Activated naive CD4-positive, alpha-beta T cell treated with anti-CD3 and anti-CD28 coated beads for 36 hours (primary cell): ENCODE measurements at regions of chr10 and their contacts with region 1.

Region 1: DNA sequence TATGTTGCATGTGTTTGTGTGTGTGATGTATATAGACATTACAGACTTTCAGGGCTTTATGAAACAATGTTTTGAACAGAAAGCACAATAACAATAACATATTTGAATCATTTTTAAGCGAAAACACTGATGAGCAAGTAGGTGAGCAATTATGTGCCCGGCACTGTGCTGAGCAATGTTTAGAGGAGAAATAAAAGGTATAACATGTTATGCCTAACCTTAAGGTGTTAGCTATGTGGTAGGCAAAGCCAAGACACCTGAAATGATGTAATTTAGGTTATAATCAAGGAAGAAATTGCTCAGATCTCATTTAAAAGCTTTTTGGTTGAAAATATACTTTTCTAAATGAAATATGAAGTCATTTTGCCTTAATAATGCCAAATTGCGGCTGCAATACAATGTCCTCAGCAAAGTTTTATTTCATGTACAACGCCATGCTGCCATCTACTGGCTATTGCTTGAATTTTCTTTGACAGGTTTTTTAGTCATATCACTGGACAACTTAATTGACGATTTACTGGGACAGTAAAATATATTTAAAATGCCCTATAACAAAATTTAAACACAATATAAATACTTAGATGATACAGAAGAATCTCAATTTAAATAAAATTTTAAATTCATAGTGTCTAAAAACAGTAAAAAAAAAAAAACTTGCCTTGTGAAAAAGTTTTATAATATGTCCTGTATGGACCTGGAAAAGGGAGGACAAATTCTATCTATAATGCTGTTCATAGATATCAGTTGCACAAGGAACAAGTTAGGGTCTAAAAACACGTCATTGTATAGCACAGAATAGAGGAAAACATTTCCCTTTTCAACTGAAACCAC is 131.1 kb upstream of the CDK1 start:
- DNase-seq: peak; percentile 71
- H3K4me3 Mint-ChIP-seq: no peak overlapping the region
- H3K27ac Mint-ChIP-seq: no peak overlapping the region
- H3K4me1 Mint-ChIP-seq: peaks cover 10% of the 10 kb centered on the region
- H3K27me3 Mint-ChIP-seq: no peaks in the 10 kb centered on the region

Region 2: GRCh38 chr10:60099998-60100747 is 547.0 kb before region 1 on chr10:
- CTCF ChIA-PET with region 1: interaction called, 8 read pairs
- intact Hi-C with region 1: loop called (anchors 1 kb)
- DNase-seq: peak; percentile 8
- H3K4me3 Mint-ChIP-seq: no peak overlapping the region
- H3K27ac Mint-ChIP-seq: no peak overlapping the region
- H3K4me1 Mint-ChIP-seq: no peaks in the 10 kb centered on the region
- H3K27me3 Mint-ChIP-seq: no peaks in the 10 kb centered on the region

Region 3: DNA sequence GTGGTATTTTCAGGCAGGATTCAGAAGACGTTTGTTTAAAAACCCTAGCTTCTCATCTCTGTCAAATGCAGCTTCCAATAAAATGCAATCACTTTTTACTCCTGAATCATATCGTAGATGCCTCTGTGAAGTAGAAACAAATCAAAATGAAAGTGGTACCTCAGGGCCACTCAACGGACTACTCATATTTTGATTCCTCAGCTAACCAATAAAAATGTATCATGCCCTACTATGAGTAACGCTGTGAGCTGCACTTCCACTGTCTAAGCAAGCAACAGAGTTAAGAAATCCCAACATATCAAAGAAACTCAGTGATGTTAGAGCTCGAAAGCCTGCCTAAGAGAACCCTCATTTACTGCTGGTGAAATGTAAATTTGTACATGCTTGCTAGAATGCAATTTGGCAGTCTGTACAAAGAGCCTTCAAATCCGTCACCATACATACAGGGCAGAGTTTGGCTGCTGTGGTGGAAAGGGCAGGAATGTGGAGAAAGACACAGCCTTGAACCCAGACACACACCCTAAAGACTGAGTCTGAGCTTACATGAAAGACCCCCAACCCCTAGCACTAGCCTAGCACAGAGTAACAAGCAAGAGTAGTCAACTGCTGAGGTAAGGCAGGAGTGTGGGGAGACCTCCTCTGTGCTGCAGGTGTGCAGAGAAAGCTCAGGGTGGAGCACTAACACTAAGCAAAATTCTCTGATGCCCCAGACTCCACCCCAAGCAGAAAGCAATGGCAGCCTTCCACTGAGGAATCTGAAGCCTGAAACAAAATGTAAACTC is 409.0 kb before region 1 on chr10:
- CTCF ChIA-PET with region 1: interaction called, 3 read pairs
- intact Hi-C with region 1: loop called (anchors 5 kb)
- DNase-seq: peak; percentile 34
- H3K4me3 Mint-ChIP-seq: no peak overlapping the region
- H3K27ac Mint-ChIP-seq: peak overlapping the region; percentile 11
- H3K4me1 Mint-ChIP-seq: peaks cover 17% of the 10 kb centered on the region
- H3K27me3 Mint-ChIP-seq: no peaks in the 10 kb centered on the region

Region 4: GRCh38 chr10:60444494-60445064 is 202.6 kb before region 1 on chr10:
- CTCF ChIA-PET with region 1: interaction called, 81 read pairs
- intact Hi-C with region 1: loop called (anchors 1 kb)
- DNase-seq: no peak
- H3K4me3 Mint-ChIP-seq: no peak overlapping the region
- H3K27ac Mint-ChIP-seq: no peak overlapping the region
- H3K4me1 Mint-ChIP-seq: peaks cover 12% of the 10 kb centered on the region
- H3K27me3 Mint-ChIP-seq: no peaks in the 10 kb centered on the region

Region 5: GRCh38 chr10:60769406-60769805 is 122.2 kb after region 1 on chr10:
- CTCF ChIA-PET with region 1: interaction called, 6 read pairs
- intact Hi-C with region 1: loop called (anchors 1 kb)
- DNase-seq: no peak
- H3K4me3 Mint-ChIP-seq: no peak overlapping the region
- H3K27ac Mint-ChIP-seq: no peak overlapping the region
- H3K4me1 Mint-ChIP-seq: no peaks in the 10 kb centered on the region
- H3K27me3 Mint-ChIP-seq: no peaks in the 10 kb centered on the region